Right cardiac atrium (tissue), 5 donors: ENCODE measurements at regions of chrX and their contacts with region 1.

Region 1: DNA sequence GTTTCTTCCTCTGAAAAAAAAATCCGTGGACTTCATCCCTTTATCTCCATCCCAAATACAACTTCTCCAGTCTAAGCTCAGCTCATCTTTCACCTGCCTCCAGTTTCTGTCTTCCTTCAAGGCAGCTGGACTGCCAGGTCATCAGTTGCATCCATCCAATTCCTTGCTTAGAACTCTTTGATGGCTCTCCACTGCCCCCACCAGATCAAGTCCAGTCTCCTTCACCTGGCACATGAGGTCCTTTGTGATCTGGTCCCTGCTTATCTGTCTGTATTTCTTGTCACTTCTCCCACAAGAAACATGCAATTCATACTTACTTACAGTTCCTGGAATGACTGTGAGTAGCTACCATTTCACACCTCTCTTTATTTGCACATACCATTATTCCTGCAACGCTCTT is 33.8 kb downstream of the OTUD6A start:
- DNase-seq: no peak
- ATAC-seq: no peak
- H3K4me3 ChIP-seq: no peak overlapping the region
- H3K27ac ChIP-seq: no peak overlapping the region
- H3K4me1 ChIP-seq: no peaks in the 10 kb centered on the region
- H3K27me3 ChIP-seq: no peaks in the 10 kb centered on the region

Region 2: GRCh38 chrX:69493193-69493592 is 602.9 kb before region 1 on chrX:
- intact Hi-C with region 1: loop called in 3 of 4 experiments (anchors 2 to 10 kb)
- DNase-seq: peak in 2 of 3 donors; percentile 39
- ATAC-seq: peak; percentile 64 to 73
- H3K4me3 ChIP-seq: no peak overlapping the region
- H3K27ac ChIP-seq: no peak overlapping the region
- H3K4me1 ChIP-seq: peaks cover 1% of the 10 kb centered on the region
- H3K27me3 ChIP-seq: no peaks in the 10 kb centered on the region

Region 3: DNA sequence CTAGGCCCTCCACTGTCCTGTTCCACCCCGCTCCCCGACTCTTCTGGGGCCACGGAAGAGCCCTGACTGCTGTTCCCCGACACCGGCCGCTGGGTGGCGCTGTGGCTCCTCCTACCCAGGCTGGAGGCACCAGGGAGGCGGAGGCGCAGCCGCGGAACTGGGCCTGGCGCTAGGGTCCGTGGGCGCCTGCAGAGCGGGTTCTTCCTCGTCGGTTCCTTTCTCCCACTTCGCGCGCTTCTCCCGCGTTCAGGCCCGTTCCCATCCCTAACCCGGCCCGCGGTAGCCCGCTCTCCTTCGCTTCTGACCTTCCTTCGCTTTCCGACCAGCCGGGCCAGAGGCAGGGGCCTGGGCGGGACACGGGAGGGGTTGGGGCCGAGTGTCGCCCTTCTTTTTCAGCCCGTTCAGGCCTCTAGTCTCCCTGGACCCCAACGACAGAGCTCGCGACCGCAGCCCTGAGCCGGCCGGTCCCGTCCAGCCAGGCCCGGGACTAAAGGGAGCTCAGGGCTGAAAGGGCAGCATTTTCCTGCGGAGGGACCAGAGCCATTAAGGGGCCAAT is 557.7 kb before region 1 on chrX:
- intact Hi-C with region 1: loop called in 2 of 4 experiments (anchors 5 to 10 kb)
- DNase-seq: peak; percentile 80 to 92 (median 90)
- ATAC-seq: peak; percentile 95 to 96
- H3K4me3 ChIP-seq: peak overlapping the region; percentile 33
- H3K27ac ChIP-seq: no peak overlapping the region
- H3K4me1 ChIP-seq: peaks cover 3% of the 10 kb centered on the region
- H3K27me3 ChIP-seq: no peaks in the 10 kb centered on the region

Region 4: GRCh38 chrX:69705818-69706217 is 390.2 kb before region 1 on chrX:
- intact Hi-C with region 1: no loop called
- DNase-seq: no peak
- ATAC-seq: no peak
- H3K4me3 ChIP-seq: no peak overlapping the region
- H3K27ac ChIP-seq: no peak overlapping the region
- H3K4me1 ChIP-seq: no peaks in the 10 kb centered on the region
- H3K27me3 ChIP-seq: no peaks in the 10 kb centered on the region

Region 5: GRCh38 chrX:70970482-70970995 is 874.5 kb after region 1 on chrX:
- intact Hi-C with region 1: no loop called
- DNase-seq: no peak
- ATAC-seq: no peak
- H3K4me3 ChIP-seq: no peak overlapping the region
- H3K27ac ChIP-seq: no peak overlapping the region
- H3K4me1 ChIP-seq: no peaks in the 10 kb centered on the region
- H3K27me3 ChIP-seq: no peaks in the 10 kb centered on the region